Activated B cell treated with CpG ODN at 0.5 μM for 24 hours (primary cell): ENCODE measurements at regions of chr6 and their contacts with region 1.

Region 1: DNA sequence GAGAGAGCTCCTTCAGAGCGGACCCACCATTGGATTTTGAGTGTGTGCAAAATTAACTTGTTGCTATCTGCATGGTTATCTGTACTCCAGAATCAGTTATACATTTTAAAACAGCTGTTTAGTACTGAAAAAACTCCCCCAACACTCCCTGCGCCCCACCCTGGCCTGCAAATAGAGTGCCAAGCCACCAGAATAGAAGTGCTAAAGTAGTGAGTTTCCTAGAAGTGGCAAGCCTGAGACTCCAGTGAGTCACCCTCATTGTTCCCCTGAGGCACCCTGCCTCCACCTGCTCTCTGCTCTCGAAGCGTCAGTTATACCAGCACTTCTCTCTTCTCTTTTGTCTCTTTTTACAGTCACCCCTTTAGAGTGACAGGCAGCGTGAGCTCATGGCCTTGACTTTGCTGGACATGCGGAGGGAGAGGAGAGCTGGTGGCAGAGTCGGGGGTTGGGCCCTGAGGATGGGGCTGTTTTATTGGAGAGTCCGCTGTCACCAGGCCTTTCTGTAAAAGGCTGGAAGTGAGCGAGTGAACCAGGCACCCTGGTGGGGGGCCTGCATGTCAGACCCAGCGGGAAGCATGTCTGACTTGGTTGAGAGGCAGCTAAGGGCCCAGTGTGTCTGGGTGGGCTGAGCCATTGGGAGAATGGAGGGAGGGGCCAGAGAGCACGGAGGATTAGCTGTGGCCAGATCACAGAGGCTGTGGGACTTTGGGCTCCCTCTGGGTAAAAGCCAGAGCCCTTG is 10.4 kb downstream of the IGF2R start:
- DNase-seq: peak; percentile 61
- ATAC-seq: peak; percentile 86
- H3K4me3 Mint-ChIP-seq: peak overlapping the region; percentile 76
- H3K27ac Mint-ChIP-seq: peak overlapping the region; percentile 90
- H3K4me1 Mint-ChIP-seq: peaks cover 88% of the 10 kb centered on the region
- H3K27me3 Mint-ChIP-seq: no peaks in the 10 kb centered on the region
- CTCF ChIP-seq: no peak

Region 2: GRCh38 chr6:159789377-159790148 is 189.7 kb before region 1 on chr6 and contains the start of gene TCP1:
- CTCF ChIA-PET with region 1: no interaction called
- POLR2A ChIA-PET with region 1: interaction called, 20 read pairs
- intact Hi-C with region 1: no loop called
- DNase-seq: peak; percentile 90
- ATAC-seq: peak; percentile 78
- H3K4me3 Mint-ChIP-seq: peak within 1 kb of the TSS; percentile 95
- H3K27ac Mint-ChIP-seq: peak within 1 kb of the TSS; percentile 95
- H3K4me1 Mint-ChIP-seq: peaks cover 49% of the 10 kb centered on the region
- H3K27me3 Mint-ChIP-seq: no peaks in the 10 kb centered on the region
- CTCF ChIP-seq: no peak
- total RNA-seq, gene TCP1: 181 and 199 TPM in 2 replicates

Region 3: DNA sequence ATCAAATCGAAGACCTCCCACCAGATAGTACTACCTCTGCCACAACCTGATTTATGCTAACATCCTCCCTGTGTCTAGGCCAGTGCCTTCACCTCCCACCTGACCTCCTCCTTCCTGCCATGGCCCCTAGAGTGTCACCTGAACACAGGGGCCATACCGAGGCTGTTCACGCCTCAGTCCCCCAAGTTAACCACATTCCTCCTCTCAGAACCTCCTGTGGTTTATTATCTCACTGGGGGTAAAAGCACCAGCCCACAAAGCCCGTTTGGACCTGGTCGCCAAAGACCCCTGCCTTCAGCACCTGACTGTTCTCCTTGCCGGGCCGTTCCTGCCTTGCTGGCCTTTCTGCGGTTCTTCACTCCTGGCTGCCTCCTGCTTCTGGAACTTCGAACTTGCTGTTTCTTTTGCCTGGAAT is 74.8 kb before region 1 on chr6:
- CTCF ChIA-PET with region 1: no interaction called
- POLR2A ChIA-PET with region 1: no interaction called
- intact Hi-C with region 1: no loop called
- DNase-seq: no peak
- ATAC-seq: no peak
- H3K4me3 Mint-ChIP-seq: no peak overlapping the region
- H3K27ac Mint-ChIP-seq: no peak overlapping the region
- H3K4me1 Mint-ChIP-seq: no peaks in the 10 kb centered on the region
- H3K27me3 Mint-ChIP-seq: peaks cover 8% of the 10 kb centered on the region
- CTCF ChIP-seq: no peak

Region 4: GRCh38 chr6:159968440-159969203 is 10.7 kb before region 1 on chr6 and contains the start of gene IGF2R:
- CTCF ChIA-PET with region 1: interaction called, 3 read pairs
- POLR2A ChIA-PET with region 1: interaction called, 69 read pairs
- intact Hi-C with region 1: loop called (anchors 1 kb)
- DNase-seq: peak; percentile 93
- ATAC-seq: peak; percentile 87
- H3K4me3 Mint-ChIP-seq: peak within 1 kb of the TSS; percentile 88
- H3K27ac Mint-ChIP-seq: peak within 1 kb of the TSS; percentile 78
- H3K4me1 Mint-ChIP-seq: peaks cover 35% of the 10 kb centered on the region
- H3K27me3 Mint-ChIP-seq: no peaks in the 10 kb centered on the region
- CTCF ChIP-seq: no peak
- total RNA-seq, gene IGF2R: 69.6 and 79.5 TPM in 2 replicates

Region 5: DNA sequence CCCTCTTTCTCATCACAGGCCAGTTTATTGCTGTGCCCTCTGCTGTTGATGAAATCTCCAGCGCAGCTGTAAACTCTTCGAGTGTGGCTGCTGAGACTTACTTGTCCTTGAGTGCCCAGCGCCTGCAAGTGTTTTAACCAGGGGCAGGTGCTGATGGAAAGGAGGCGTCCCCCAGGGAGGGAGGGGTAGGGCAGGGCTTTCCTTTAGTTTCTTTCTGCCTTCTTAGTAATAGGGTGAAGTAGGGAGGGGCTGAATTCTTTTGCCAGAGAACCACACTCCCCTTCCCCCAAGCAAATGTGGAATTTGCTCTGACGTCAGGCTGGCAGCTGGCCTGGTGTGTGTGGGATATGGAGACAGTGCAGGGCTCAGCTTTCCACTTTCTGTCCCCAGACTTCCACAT is 50.8 kb after region 1 on chr6:
- CTCF ChIA-PET with region 1: no interaction called
- POLR2A ChIA-PET with region 1: interaction called, 3 read pairs
- intact Hi-C with region 1: loop called (anchors 5 kb)
- DNase-seq: no peak
- ATAC-seq: no peak
- H3K4me3 Mint-ChIP-seq: no peak overlapping the region
- H3K27ac Mint-ChIP-seq: no peak overlapping the region
- H3K4me1 Mint-ChIP-seq: peaks cover 24% of the 10 kb centered on the region
- H3K27me3 Mint-ChIP-seq: no peaks in the 10 kb centered on the region
- CTCF ChIP-seq: no peak

Region 6: DNA sequence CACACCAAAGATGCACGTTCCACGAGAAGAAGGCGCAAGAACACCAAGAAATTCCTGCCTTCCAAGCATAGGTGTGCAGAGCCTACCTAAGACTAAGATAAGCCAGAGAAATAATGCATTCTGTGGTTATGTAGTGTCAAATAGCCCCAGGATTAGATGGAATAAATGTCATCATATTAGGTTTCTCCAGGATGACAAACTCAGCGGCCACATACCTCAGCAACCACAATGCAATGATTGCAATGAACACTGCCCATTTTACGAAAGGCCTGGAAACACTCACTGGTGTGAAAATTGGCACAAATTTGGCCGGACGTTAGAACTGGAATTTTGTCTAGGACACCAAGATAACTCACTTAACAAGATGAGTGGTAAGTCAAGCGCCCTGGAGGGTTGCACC is 498.6 kb after region 1 on chr6:
- CTCF ChIA-PET with region 1: no interaction called
- POLR2A ChIA-PET with region 1: no interaction called
- intact Hi-C with region 1: no loop called
- DNase-seq: no peak
- ATAC-seq: no peak
- H3K4me3 Mint-ChIP-seq: no peak overlapping the region
- H3K27ac Mint-ChIP-seq: no peak overlapping the region
- H3K4me1 Mint-ChIP-seq: no peaks in the 10 kb centered on the region
- H3K27me3 Mint-ChIP-seq: peaks cover 7% of the 10 kb centered on the region
- CTCF ChIP-seq: no peak